Activated CD4-positive, alpha-beta memory T cell treated with anti-CD3 and anti-CD28 coated beads, Interleukin-2, amount 10 ng/mL, durations not matched to agents 7 days and 5 days (primary cell): ENCODE measurements at regions of chr1 and their contacts with region 1.

Region 1: DNA sequence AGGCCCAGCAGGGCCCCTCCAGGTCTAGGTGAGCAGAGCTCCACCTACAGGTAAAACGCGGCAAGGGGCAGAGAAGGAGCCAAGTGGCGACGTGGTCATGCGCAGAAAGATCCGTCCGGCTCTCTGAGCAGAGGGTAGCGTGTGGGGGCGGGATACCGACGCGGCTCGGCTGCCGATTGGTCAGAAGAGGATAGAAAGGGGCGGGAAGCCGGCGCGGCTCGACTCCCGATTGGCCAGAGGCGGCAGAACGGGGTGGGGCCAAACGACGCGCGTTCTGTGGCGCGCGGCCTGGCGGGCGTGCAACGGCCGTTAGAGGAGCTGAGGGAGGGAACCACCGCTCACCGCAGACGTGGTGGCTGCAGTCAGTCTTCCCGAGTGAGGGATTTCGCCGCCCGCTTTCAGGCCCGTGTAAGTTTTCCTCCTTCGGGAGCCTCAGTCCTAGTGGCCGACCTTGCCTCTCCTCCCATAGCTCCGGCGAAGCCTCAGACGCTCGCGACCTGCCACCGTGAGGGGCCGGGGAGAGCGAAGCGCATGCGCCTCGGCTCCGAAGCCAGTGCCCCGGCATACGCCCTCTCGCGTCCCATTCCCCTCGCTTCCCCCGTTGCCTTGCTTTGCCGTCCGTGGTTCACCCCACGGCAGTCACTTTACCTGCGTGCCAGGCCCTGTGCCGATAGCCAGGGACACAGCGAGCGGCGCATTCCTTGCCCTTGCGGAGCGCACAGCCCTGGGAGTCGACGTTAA is at the start of gene CEP85:
- DNase-seq: peak; percentile 99
- H3K4me3 Mint-ChIP-seq: peak within 1 kb of the TSS; percentile 96
- H3K27ac Mint-ChIP-seq: peak within 1 kb of the TSS; percentile 87
- H3K4me1 Mint-ChIP-seq: peaks cover 40% of the 10 kb centered on the region
- H3K27me3 Mint-ChIP-seq: no peaks in the 10 kb centered on the region
- total RNA-seq, gene CEP85: 35.5 to 37.7 TPM

Region 2: GRCh38 chr1:25780311-25781129 is 453.6 kb before region 1 on chr1:
- CTCF ChIA-PET with region 1: no interaction called
- POLR2A ChIA-PET with region 1: no interaction called
- DNase-seq: no peak
- H3K4me3 Mint-ChIP-seq: no peak overlapping the region
- H3K27ac Mint-ChIP-seq: no peak overlapping the region
- H3K4me1 Mint-ChIP-seq: peaks cover 4% of the 10 kb centered on the region
- H3K27me3 Mint-ChIP-seq: no peaks in the 10 kb centered on the region

Region 3: GRCh38 chr1:26072305-26072704 is 161.8 kb before region 1 on chr1:
- CTCF ChIA-PET with region 1: no interaction called
- POLR2A ChIA-PET with region 1: no interaction called
- DNase-seq: no peak
- H3K4me3 Mint-ChIP-seq: no peak overlapping the region
- H3K27ac Mint-ChIP-seq: no peak overlapping the region
- H3K4me1 Mint-ChIP-seq: peaks cover 15% of the 10 kb centered on the region
- H3K27me3 Mint-ChIP-seq: peaks cover 32% of the 10 kb centered on the region

Region 4: DNA sequence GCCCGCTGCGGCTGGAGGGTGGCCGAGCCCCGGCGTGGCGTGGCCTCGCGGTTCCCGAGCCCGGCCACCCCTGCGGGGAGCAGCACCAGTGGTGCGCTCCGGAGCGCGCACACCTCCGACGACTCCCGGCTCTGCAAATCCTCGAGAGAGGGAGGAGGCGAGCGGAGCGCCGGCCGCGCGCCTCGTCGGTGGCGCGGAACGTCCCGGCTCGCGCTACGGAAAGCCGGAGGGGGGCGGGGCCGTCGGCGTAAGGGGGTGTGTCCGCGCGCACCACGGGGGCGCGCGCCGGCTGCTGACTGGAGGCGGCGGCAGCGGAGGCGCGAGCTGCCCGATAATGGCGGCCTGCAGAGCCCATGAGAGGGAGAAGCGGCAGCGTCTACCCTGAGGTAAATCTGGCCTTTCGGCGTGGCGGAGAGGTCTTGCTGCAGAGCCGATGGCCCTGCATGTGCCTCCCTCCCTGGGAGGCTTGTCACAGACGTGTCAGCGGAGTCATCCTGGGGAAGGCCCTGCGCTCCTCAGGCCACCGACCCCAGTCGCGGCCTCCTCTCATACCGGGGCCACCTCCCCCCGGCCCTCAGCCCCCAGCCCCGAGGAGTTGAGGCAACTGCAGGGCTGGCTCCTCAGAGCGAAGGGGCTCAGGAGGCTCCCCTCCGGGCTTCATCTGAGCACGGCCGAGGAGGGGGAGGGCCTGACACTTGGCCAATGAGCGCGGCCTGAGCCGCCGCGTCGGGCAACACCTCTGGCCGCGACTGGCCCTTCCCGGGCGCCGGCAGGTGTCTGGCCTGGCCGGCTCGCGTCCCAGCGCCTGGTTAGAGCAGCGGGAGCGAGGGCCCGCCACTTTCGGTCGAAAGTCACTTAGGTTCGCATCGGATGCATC is 122.3 kb before region 1 on chr1 and contains the start of gene PDIK1L:
- CTCF ChIA-PET with region 1: interaction called, 6 read pairs
- POLR2A ChIA-PET with region 1: interaction called, 20 read pairs
- DNase-seq: peak; percentile 95
- H3K4me3 Mint-ChIP-seq: peak within 1 kb of the TSS; percentile 95
- H3K27ac Mint-ChIP-seq: peak within 1 kb of the TSS; percentile 86
- H3K4me1 Mint-ChIP-seq: peaks cover 35% of the 10 kb centered on the region
- H3K27me3 Mint-ChIP-seq: no peaks in the 10 kb centered on the region
- total RNA-seq, gene PDIK1L: 21.3 to 22.7 TPM

Region 5: DNA sequence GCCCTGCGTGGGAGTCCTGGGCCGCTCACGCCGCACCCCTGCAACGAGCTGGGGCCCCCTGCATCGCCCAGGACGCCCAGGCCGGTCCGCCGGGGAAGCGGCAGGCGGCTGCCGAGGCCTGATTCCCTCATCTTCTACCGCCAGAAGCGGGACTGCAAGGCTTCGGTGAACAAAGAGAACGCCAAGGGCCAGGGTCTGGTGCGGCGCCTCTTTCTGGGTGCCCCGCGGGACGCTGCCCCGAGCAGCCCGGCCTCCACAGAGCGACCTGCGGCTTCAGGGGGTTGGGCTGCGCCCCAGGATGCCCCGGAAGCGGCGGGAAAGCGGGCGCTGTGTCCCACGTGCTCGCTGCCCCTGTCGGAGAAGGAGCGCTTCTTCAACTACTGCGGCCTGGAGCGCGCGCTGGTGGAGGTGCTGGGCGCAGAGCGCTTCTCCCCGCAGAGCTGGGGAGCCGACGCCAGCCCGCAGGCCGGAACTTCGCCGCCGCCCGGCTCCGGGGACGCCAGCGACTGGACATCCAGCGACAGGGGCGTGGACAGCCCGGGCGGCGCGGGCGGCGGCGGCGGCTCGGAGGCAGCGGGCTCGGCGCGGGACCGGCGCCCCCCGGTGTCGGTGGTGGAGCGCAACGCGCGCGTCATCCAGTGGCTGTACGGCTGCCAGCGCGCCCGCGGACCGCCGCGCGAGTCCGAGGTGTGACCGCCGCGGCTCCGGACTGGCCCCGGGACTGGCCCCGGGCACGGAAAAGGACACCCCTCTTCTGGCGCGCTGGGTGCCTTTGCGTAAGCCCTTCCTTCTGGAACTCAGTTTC is 72.5 kb before region 1 on chr1:
- CTCF ChIA-PET with region 1: interaction called, 14 read pairs
- POLR2A ChIA-PET with region 1: interaction called, 7 read pairs
- DNase-seq: peak; percentile 35
- H3K4me3 Mint-ChIP-seq: no peak overlapping the region
- H3K27ac Mint-ChIP-seq: no peak overlapping the region
- H3K4me1 Mint-ChIP-seq: peaks cover 27% of the 10 kb centered on the region
- H3K27me3 Mint-ChIP-seq: peaks cover 50% of the 10 kb centered on the region

Region 6: GRCh38 chr1:26190373-26190987 is 43.6 kb before region 1 on chr1 and contains the start of gene CATSPER4:
- CTCF ChIA-PET with region 1: interaction called, 22 read pairs
- POLR2A ChIA-PET with region 1: interaction called, 11 read pairs
- DNase-seq: no peak
- H3K4me3 Mint-ChIP-seq: no peak within 1 kb of the TSS
- H3K27ac Mint-ChIP-seq: no peak within 1 kb of the TSS
- H3K4me1 Mint-ChIP-seq: peaks cover 21% of the 10 kb centered on the region
- H3K27me3 Mint-ChIP-seq: peaks cover 9% of the 10 kb centered on the region
- total RNA-seq, gene CATSPER4: not detected

Region 7: GRCh38 chr1:26218906-26219494 is 15.1 kb before region 1 on chr1:
- CTCF ChIA-PET with region 1: interaction called, 20 read pairs
- POLR2A ChIA-PET with region 1: interaction called, 6 read pairs
- DNase-seq: no peak
- H3K4me3 Mint-ChIP-seq: no peak overlapping the region
- H3K27ac Mint-ChIP-seq: no peak overlapping the region
- H3K4me1 Mint-ChIP-seq: no peaks in the 10 kb centered on the region
- H3K27me3 Mint-ChIP-seq: peaks cover 15% of the 10 kb centered on the region

Region 8: DNA sequence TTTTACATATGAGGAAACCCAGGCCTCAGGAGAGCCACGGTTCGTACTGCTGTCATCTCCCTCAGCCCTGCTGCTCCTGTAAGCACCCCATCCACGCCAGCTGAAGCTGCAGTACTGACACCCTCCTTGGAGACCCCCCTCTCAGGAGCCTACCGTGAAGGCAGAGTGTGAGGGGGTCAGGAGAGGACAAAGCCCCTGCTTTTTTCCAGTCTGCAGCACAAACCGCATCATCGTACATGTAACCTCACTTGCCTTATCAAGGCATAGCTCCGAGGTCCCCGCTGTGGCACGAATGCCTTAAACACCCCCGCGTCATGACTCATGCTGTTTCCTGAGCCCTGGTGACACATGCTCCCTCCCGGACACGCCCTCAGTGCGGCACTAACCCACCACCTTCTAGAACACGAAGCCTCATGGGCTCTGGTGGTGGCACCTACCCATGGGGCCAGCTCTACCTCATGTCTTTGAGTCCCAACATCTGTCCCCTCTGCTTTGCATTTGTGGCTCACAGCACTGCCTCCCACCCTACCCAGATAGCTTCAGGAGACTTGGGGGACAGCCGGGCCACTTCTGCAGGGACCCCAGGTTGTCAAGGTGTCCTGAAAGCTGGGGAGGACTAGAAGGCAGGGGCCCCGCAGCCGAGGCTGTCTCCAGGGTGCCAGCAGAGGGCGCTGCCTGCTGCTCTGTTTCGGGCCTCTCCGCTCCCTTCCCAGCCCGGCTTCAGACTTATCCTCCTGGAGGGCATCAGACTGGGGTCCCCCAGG is 50.7 kb after region 1 on chr1:
- CTCF ChIA-PET with region 1: interaction called, 19 read pairs
- POLR2A ChIA-PET with region 1: interaction called, 27 read pairs
- DNase-seq: peak; percentile 97
- H3K4me3 Mint-ChIP-seq: peak overlapping the region; percentile 82
- H3K27ac Mint-ChIP-seq: peak overlapping the region; percentile 98
- H3K4me1 Mint-ChIP-seq: peaks cover 91% of the 10 kb centered on the region
- H3K27me3 Mint-ChIP-seq: no peaks in the 10 kb centered on the region

Region 9: GRCh38 chr1:26358411-26359384 is 124.6 kb after region 1 on chr1:
- CTCF ChIA-PET with region 1: interaction called, 12 read pairs
- POLR2A ChIA-PET with region 1: interaction called, 7 read pairs
- DNase-seq: peak; percentile 87
- H3K4me3 Mint-ChIP-seq: peak overlapping the region; percentile 14
- H3K27ac Mint-ChIP-seq: peak overlapping the region; percentile 48
- H3K4me1 Mint-ChIP-seq: peaks cover 60% of the 10 kb centered on the region
- H3K27me3 Mint-ChIP-seq: peaks cover 17% of the 10 kb centered on the region